H1 (cell line): ENCODE measurements at regions of chr1 and their contacts with region 1.

Region 1: DNA sequence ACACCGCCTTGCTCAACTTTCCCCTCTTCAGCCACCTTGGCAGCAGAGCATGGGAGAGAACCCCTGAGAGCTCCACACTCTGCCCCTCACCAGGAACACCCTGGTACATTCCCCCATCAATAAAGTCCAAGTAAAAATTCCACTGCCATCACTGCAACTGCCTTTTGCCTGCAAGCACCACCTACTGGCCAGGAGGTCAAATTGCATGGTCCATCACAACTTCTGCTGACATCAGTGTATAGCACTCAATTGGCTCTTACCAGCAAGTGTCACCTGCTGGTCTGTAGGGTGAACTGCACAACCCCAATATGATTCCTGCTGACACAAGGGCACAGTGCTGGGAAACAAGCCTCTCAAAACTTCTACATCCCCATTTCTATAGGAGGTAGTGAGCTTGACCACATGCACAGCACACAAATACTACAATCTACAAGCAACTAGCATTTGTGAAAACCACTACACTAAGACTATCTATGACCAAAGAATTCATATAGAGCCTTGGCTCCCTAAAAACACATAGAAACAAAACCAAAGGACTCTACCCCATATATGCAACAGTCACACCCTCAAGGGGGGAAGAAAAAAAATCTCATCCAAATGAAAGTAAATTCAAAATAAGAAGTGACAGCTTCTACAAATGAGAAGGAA is 69.2 kb downstream of the FASLG start:
- DNase-seq: peak in 1 of 2 experiments; percentile 62
- H3K4me3 ChIP-seq: no peak overlapping the region
- H3K27ac ChIP-seq: no peak overlapping the region
- H3K4me1 ChIP-seq: no peaks in the 10 kb centered on the region
- H3K27me3 ChIP-seq: no peaks in the 10 kb centered on the region
- CTCF ChIP-seq: peak; percentile 89 to 100 (median 99)
- EP300 ChIP-seq: no peak
- POLR2A ChIP-seq: no peak
- RAD21 ChIP-seq: peak; percentile 84

Region 2: DNA sequence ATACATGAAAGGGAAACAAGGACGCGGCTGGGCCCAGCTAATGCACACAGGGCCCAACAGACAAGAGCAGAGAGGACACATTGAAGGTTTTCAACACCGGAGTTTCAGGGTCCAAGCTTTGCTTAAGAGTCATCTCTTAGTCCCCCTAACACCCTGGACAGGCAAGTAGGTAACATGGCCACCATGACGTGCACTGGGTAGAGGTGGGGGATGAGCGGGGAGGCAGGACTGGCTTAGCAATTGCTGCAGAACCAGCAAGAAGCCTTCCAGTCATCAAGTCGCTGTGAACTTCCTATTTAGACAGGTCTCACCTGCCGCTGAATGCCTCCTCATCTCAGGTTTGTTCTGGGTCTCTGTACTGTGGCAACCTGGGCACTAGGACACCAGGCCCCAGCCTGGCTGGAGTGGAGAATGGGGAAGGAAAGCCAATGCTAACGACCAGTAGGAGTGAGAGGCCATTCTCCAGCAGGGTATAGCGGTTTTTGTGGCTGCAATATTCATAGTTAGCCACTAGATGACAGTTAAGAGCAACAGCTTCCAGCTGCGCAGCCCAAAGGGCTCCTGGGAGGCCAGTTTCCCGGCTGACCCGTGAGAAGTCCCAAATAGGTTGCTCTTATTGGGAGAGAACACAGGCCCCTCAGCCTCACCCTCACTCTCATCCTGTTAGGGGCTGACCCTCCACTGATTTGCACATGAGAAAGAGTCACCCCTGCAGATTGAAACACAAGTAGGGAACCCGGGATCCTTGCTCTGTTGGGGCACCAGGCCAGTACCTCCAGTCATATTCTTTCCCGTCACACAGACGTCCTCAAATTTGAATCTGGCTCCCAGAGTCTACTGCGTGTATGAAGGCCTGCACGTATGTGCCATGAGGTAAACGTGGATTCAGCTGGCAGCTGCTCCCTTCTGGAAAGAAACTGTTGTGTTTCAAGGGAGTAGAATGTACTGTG is 278.2 kb before region 1 on chr1:
- CTCF ChIA-PET with region 1: interaction called, 39 read pairs
- POLR2A ChIA-PET with region 1: no interaction called
- DNase-seq: peak; percentile 36 to 70
- H3K4me3 ChIP-seq: no peak overlapping the region
- H3K27ac ChIP-seq: no peak overlapping the region
- H3K4me1 ChIP-seq: no peaks in the 10 kb centered on the region
- H3K27me3 ChIP-seq: peaks cover 0 to 2% (median 0%) of the 10 kb centered on the region in 4 experiments; a peak in 1 of 7 replicates
- CTCF ChIP-seq: peak; percentile 60 to 90 (median 87)
- EP300 ChIP-seq: no peak
- POLR2A ChIP-seq: no peak
- RAD21 ChIP-seq: peak; percentile 80 to 84

Region 3: GRCh38 chr1:172609528-172609927 is 118.6 kb before region 1 on chr1:
- CTCF ChIA-PET with region 1: interaction called, 38 read pairs
- POLR2A ChIA-PET with region 1: no interaction called
- DNase-seq: no peak
- H3K4me3 ChIP-seq: no peak overlapping the region
- H3K27ac ChIP-seq: no peak overlapping the region
- H3K4me1 ChIP-seq: no peaks in the 10 kb centered on the region
- H3K27me3 ChIP-seq: no peaks in the 10 kb centered on the region
- CTCF ChIP-seq: peak in 2 of 3 experiments; percentile 20 to 27; a peak in 2 of 4 replicates
- EP300 ChIP-seq: no peak
- POLR2A ChIP-seq: no peak
- RAD21 ChIP-seq: peak; percentile 28 to 43

Region 4: GRCh38 chr1:172638885-172639831 is 88.9 kb before region 1 on chr1:
- CTCF ChIA-PET with region 1: interaction called, 20 read pairs
- POLR2A ChIA-PET with region 1: no interaction called
- DNase-seq: no peak
- H3K4me3 ChIP-seq: no peak overlapping the region
- H3K27ac ChIP-seq: no peak overlapping the region
- H3K4me1 ChIP-seq: no peaks in the 10 kb centered on the region
- H3K27me3 ChIP-seq: no peaks in the 10 kb centered on the region
- CTCF ChIP-seq: no peak
- EP300 ChIP-seq: no peak
- POLR2A ChIP-seq: no peak
- RAD21 ChIP-seq: no peak

Region 5: DNA sequence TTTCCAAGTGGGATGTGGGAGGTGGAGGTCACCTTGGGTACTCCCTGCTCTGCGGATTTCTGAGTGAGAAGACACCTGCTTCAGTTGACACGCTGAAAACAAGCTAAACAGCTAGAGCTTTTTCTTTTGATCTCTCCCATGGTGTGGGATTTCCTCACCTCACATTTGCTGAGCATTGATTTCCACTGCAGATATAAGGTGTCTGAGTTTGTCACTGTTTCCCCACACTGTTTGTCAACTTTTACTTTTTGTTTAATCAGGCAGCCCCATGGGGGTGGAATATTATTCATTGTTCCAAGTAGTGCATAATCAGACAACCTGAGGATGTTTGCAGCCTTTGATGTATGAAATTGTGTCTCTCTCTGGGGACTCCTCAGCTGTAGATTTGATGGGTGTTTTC is 19.6 kb before region 1 on chr1:
- CTCF ChIA-PET with region 1: interaction called, 15 read pairs
- POLR2A ChIA-PET with region 1: no interaction called
- DNase-seq: no peak
- H3K4me3 ChIP-seq: no peak overlapping the region
- H3K27ac ChIP-seq: no peak overlapping the region
- H3K4me1 ChIP-seq: peaks cover 0 to 3% (median 0%) of the 10 kb centered on the region in 4 experiments; a peak in 2 of 7 replicates
- H3K27me3 ChIP-seq: no peaks in the 10 kb centered on the region
- CTCF ChIP-seq: no peak
- EP300 ChIP-seq: no peak
- POLR2A ChIP-seq: no peak
- RAD21 ChIP-seq: no peak

Region 6: DNA sequence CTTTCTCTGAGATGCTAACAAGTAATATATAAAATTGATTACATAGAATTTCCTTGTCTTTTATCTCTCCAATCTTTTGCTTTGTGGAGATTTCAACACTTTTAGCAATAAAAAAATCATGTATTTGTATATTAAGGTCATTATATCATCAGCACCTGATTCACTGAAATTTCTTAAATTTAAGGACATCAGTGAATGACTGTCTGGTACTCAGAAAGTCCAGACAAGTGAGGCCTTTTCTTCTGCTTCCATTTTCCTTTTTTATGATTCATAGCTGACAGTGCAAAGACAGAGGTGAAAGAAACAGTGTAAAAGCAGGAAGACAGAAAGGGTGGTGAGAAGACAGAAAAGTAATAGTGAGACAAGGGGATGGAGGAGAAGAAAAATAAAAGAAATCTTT is 14.6 kb before region 1 on chr1:
- CTCF ChIA-PET with region 1: interaction called, 41 read pairs
- POLR2A ChIA-PET with region 1: no interaction called
- DNase-seq: no peak
- H3K4me3 ChIP-seq: no peak overlapping the region
- H3K27ac ChIP-seq: no peak overlapping the region
- H3K4me1 ChIP-seq: peaks cover 0 to 5% (median 0%) of the 10 kb centered on the region in 4 experiments; a peak in 1 of 7 replicates
- H3K27me3 ChIP-seq: no peaks in the 10 kb centered on the region
- CTCF ChIP-seq: no peak
- EP300 ChIP-seq: no peak
- POLR2A ChIP-seq: no peak
- RAD21 ChIP-seq: no peak